ENCODE measurements at regions of chr7 and their contacts with region 1.

Region 1: DNA sequence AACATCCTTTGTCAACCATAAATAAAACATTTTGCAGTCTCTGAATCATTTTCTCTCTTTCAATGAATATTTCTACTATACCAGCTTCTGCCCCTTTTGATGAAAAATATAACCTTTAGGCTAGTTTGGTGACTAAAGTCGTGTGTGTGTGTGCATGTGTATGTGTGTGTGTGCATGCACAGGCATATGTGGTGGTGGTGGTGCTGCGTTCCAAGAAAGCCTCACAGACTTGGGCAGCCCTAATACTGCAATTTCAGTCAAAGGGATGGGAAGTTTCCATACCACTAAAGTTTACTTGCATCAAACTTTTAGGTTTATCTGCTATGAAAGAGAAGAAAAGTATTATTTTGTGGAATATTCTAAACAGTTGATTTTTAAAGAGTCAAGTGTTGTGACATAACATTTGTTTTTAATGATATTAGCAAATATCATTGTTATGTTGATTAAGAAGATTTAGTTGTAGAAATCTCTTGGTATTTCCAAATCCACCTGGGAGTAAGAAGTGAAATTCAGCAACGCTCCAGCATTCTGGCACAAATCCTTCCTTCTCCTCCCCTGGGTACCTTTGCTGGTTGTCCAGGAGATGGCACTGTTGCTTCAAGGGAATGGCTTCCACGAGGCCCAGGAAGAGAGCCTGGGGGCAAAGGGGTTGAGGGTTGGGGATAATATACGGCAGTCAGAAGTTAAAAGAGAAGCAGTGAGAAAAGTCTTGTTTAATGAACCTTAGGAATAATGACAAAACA is 41.5 kb downstream of the ASB4 start:
- DNase-seq: peak; percentile 62
- ATAC-seq: peak; percentile 96
- H3K4me3 Mint-ChIP-seq: no peak overlapping the region
- H3K27ac Mint-ChIP-seq: no peak overlapping the region
- H3K4me1 Mint-ChIP-seq: peaks cover 3% of the 10 kb centered on the region; the same call in 1 of the 2 replicates
- H3K27me3 Mint-ChIP-seq: no peaks in the 10 kb centered on the region; the same call in 1 of the 2 replicates
- CTCF ChIP-seq: peak; percentile 60; the same call in 1 of the 2 replicates

Region 2: DNA sequence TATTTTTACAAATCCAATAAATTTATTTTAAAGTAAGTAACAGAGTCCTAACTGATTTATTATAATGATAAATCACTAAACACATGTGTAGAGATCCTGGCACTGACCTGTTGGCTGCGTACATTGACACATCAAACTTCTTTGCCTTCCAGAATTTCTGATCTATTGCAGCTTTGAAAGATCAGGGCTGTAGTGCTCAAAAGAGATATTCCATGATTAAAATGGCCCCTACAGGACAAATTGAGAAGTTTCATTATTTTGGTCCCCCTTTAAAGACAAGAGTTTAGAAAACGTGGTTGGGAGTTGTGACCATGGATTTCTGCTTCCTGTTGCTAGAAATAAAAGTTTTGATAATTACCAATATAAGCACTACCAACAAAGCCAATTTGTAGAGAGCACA is 156.8 kb after region 1 on chr7:
- CTCF ChIA-PET with region 1: interaction called, 232 read pairs
- POLR2A ChIA-PET with region 1: interaction called, 3 read pairs
- DNase-seq: no peak
- ATAC-seq: peak; percentile 61
- H3K4me3 Mint-ChIP-seq: no peak overlapping the region
- H3K27ac Mint-ChIP-seq: no peak overlapping the region
- H3K4me1 Mint-ChIP-seq: 0 out of 2 replicates have a peak, but pooled peaks cover 3% of the 10 kb centered on the region
- H3K27me3 Mint-ChIP-seq: no peaks in the 10 kb centered on the region
- CTCF ChIP-seq: no peak

Region 3: GRCh38 chr7:95690367-95690947 is 163.3 kb after region 1 on chr7:
- CTCF ChIA-PET with region 1: interaction called, 232 read pairs
- POLR2A ChIA-PET with region 1: interaction called, 3 read pairs
- DNase-seq: no peak
- ATAC-seq: peak; percentile 64
- H3K4me3 Mint-ChIP-seq: peak overlapping the region; percentile 29
- H3K27ac Mint-ChIP-seq: no peak overlapping the region
- H3K4me1 Mint-ChIP-seq: peaks cover 6% of the 10 kb centered on the region; the same call in 1 of the 2 replicates
- H3K27me3 Mint-ChIP-seq: no peaks in the 10 kb centered on the region
- CTCF ChIP-seq: peak; percentile 60

Region 4: DNA sequence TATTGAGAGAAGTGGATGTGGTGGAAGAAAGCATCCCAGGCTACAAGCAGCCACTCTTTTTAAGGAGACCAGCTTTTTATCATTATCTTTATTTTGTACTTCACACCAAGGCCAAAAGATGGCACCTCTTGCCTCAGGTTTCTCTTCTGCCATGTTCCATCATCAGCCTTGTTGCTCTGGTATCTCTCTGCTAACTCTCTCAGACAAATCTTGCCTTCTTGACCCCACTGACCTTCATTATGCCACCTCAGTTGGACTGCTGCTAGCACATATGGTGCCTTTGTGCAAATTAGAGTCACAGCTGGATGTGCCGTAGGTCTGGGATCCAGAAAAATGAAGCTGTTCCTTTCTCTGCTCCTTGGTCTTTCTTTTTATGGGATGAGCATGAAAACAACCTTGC is 198.0 kb after region 1 on chr7:
- CTCF ChIA-PET with region 1: no interaction called
- POLR2A ChIA-PET with region 1: no interaction called
- DNase-seq: no peak
- ATAC-seq: peak; percentile 71
- H3K4me3 Mint-ChIP-seq: no peak overlapping the region
- H3K27ac Mint-ChIP-seq: no peak overlapping the region
- H3K4me1 Mint-ChIP-seq: no peaks in the 10 kb centered on the region
- H3K27me3 Mint-ChIP-seq: no peaks in the 10 kb centered on the region
- CTCF ChIP-seq: no peak